ENCODE measurements at regions of chr11 and their contacts with region 1.

Region 1: DNA sequence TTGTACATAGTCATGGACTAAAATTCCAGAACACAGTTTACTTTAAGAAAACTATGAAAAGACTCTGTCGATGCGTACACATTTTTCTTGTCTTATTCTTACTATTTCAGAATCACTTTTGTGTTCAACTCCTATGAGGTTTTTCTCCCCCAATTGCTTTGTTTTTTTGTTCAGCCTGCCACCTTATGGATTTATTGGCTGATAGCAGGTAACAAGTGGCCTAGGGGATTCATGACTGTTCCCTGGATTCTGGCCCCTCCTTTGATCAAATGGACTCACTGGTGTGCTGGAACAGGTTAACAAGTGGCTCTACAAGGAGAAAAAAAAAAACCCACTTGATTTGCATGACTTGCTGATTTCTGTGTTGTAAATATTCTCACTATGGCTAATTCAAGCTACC is 10.6 kb downstream of the MMP20 start:
- DNase-seq: peak; percentile 17
- H3K4me3 ChIP-seq: no peak overlapping the region
- H3K27ac ChIP-seq: no peak overlapping the region
- H3K4me1 ChIP-seq: no peaks in the 10 kb centered on the region
- H3K27me3 ChIP-seq: no peaks in the 10 kb centered on the region
- CTCF ChIP-seq: peak; percentile 29; the same call in 1 of the 2 replicates

Region 2: DNA sequence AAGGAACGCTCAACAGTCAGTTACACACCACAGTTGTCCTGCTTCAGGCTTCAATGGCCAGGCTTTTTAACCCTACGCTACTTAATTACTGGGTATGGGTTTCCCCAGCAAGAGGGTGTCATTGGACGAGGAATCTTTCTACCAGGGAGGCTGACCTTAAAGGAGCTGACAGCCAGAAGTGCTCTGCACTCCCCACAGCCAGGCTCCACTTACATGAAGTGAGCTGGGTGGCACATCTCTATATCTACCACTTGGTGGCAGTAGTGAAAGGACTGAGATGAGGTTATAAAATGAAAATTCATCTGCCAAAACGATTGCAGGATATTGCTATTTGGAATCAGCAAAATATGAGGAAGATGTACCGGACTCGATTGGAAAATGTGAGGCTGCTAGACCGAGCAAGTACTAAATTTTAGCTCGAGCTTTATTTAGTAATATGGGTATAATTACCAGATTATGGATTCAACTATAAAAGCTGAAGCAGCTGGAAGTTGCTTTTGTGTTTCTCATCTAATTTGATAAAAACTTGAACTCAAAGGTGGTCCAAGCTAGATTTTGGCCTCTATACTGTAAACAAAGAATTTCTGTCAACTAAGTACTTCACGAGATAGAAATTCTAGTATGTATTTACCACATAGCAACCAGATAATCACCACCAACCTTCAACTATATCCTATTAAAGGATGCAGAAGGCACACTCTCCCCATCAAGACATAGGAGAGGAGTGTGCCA is 753.6 kb before region 1 on chr11:
- CTCF ChIA-PET with region 1: no interaction called
- POLR2A ChIA-PET with region 1: no interaction called
- intact Hi-C with region 1: loop called (anchors 10 kb)
- DNase-seq: peak; percentile 74
- H3K4me3 ChIP-seq: no peak overlapping the region
- H3K27ac ChIP-seq: no peak overlapping the region
- H3K4me1 ChIP-seq: peaks cover 10% of the 10 kb centered on the region
- H3K27me3 ChIP-seq: no peaks in the 10 kb centered on the region
- CTCF ChIP-seq: peak; percentile 88

Region 3: GRCh38 chr11:102287964-102288724 is 326.3 kb before region 1 on chr11:
- CTCF ChIA-PET with region 1: no interaction called
- POLR2A ChIA-PET with region 1: no interaction called
- intact Hi-C with region 1: loop called (anchors 5 kb)
- DNase-seq: peak; percentile 89
- H3K4me3 ChIP-seq: peak overlapping the region; percentile 22
- H3K27ac ChIP-seq: no peak overlapping the region
- H3K4me1 ChIP-seq: peaks cover 19% of the 10 kb centered on the region
- H3K27me3 ChIP-seq: no peaks in the 10 kb centered on the region
- CTCF ChIP-seq: peak; percentile 90

Region 4: GRCh38 chr11:102341844-102342318 is 272.6 kb before region 1 on chr11:
- CTCF ChIA-PET with region 1: interaction called, 11 read pairs
- POLR2A ChIA-PET with region 1: no interaction called
- intact Hi-C with region 1: loop called (anchors 5 kb)
- DNase-seq: peak; percentile 91
- H3K4me3 ChIP-seq: no peak overlapping the region
- H3K27ac ChIP-seq: no peak overlapping the region
- H3K4me1 ChIP-seq: no peaks in the 10 kb centered on the region
- H3K27me3 ChIP-seq: no peaks in the 10 kb centered on the region
- CTCF ChIP-seq: peak; percentile 94

Region 5: GRCh38 chr11:102637731-102638130 is 23.2 kb after region 1 on chr11:
- CTCF ChIA-PET with region 1: no interaction called
- POLR2A ChIA-PET with region 1: no interaction called
- intact Hi-C with region 1: no loop called
- DNase-seq: peak; percentile 39
- H3K4me3 ChIP-seq: no peak overlapping the region
- H3K27ac ChIP-seq: no peak overlapping the region
- H3K4me1 ChIP-seq: peaks cover 31% of the 10 kb centered on the region
- H3K27me3 ChIP-seq: peaks cover 52% of the 10 kb centered on the region
- CTCF ChIP-seq: no peak